IMR-90 (cell line): ENCODE measurements at regions of chr13 and their contacts with region 1.

Region 1: GRCh38 chr13:114226699-114227323 is 7.9 kb upstream of the CDC16 start:
- DNase-seq: peak; percentile 79
- ATAC-seq: peak; percentile 93
- H3K4me3 ChIP-seq: no peak overlapping the region
- H3K27ac ChIP-seq: no peak overlapping the region
- H3K4me1 ChIP-seq: peaks cover 10% of the 10 kb centered on the region
- H3K27me3 ChIP-seq: no peaks in the 10 kb centered on the region
- CTCF ChIP-seq: peak; percentile 97
- POLR2A ChIP-seq: peak; percentile 63; the same call in 1 of the 2 replicates
- RAD21 ChIP-seq: peak; percentile 99

Region 2: DNA sequence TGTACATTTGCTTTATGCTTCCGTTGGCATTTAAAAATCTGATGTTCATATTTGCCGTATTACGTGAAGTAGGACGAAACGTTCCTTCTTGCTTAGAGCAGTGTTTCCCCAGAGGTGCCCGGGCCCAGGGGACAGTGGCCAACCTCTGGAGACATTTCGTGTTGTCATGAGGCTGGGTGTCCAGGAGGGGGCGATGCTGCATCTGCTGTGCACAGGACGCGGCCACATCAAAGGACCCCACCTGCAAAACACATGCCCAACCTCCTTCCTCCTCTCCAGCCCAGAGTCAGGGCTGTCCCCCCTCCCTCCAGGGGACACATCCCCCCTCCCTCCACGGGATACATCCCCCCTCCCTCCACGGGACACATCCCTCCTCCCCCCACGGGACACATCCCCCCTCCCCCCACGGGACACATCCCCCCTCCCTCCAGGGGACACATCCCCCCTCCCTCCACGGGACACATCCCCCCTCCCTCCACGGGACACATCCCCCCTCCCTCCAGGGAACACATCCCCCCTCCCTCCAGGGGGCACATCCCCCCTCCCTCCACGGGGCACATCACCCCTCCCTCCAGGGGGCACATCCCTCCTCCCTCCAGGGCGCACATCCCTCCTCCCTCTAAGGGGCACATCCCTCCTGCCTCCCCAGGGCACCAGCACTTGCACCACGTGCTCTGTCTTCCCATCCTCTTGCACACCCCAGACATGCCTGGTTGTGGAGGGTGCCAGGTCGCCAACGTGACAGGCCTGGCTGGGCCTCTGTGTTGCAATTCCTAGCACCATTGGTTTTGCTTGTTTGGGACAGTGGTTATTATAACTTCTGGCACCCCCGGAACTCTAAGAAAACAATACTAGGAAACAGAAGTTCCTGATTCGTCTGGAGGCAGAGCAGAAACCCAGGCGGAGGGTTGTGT is 409.6 kb before region 1 on chr13:
- CTCF ChIA-PET with region 1: no interaction called
- POLR2A ChIA-PET with region 1: no interaction called
- dilution Hi-C with region 1: no loop called
- in situ Hi-C with region 1: no loop called
- intact Hi-C with region 1: loop called (anchors 1 kb)
- DNase-seq: peak; percentile 83
- ATAC-seq: peak; percentile 3
- H3K4me3 ChIP-seq: no peak overlapping the region
- H3K27ac ChIP-seq: peak overlapping the region; percentile 3; the same call in 1 of the 2 replicates
- H3K4me1 ChIP-seq: peaks cover 32% of the 10 kb centered on the region
- H3K27me3 ChIP-seq: no peaks in the 10 kb centered on the region
- CTCF ChIP-seq: peak; percentile 78
- POLR2A ChIP-seq: no peak
- RAD21 ChIP-seq: peak; percentile 80

Region 3: GRCh38 chr13:113904411-113904810 is 322.4 kb before region 1 on chr13:
- CTCF ChIA-PET with region 1: no interaction called
- POLR2A ChIA-PET with region 1: no interaction called
- dilution Hi-C with region 1: no loop called
- in situ Hi-C with region 1: no loop called
- intact Hi-C with region 1: no loop called
- DNase-seq: peak; percentile 43
- ATAC-seq: no peak
- H3K4me3 ChIP-seq: no peak overlapping the region
- H3K27ac ChIP-seq: peak overlapping the region; percentile 23
- H3K4me1 ChIP-seq: peaks cover 30% of the 10 kb centered on the region
- H3K27me3 ChIP-seq: no peaks in the 10 kb centered on the region
- CTCF ChIP-seq: peak; percentile 58
- POLR2A ChIP-seq: no peak
- RAD21 ChIP-seq: peak; percentile 71

Region 4: GRCh38 chr13:113951246-113951999 is 275.4 kb before region 1 on chr13:
- CTCF ChIA-PET with region 1: no interaction called
- POLR2A ChIA-PET with region 1: no interaction called
- dilution Hi-C with region 1: no loop called
- in situ Hi-C with region 1: no loop called
- intact Hi-C with region 1: loop called (anchors 1 kb)
- DNase-seq: peak; percentile 45
- ATAC-seq: peak; percentile 74
- H3K4me3 ChIP-seq: no peak overlapping the region
- H3K27ac ChIP-seq: no peak overlapping the region
- H3K4me1 ChIP-seq: peaks cover 13% of the 10 kb centered on the region
- H3K27me3 ChIP-seq: no peaks in the 10 kb centered on the region
- CTCF ChIP-seq: peak; percentile 65
- POLR2A ChIP-seq: no peak
- RAD21 ChIP-seq: peak; percentile 75

Region 5: GRCh38 chr13:114025714-114026431 is 200.9 kb before region 1 on chr13:
- CTCF ChIA-PET with region 1: no interaction called
- POLR2A ChIA-PET with region 1: no interaction called
- dilution Hi-C with region 1: no loop called
- in situ Hi-C with region 1: no loop called
- intact Hi-C with region 1: loop called (anchors 2 kb)
- DNase-seq: peak; percentile 78
- ATAC-seq: peak; percentile 82
- H3K4me3 ChIP-seq: no peak overlapping the region
- H3K27ac ChIP-seq: peak overlapping the region; percentile 38; the same call in 1 of the 2 replicates
- H3K4me1 ChIP-seq: peaks cover 27% of the 10 kb centered on the region
- H3K27me3 ChIP-seq: no peaks in the 10 kb centered on the region
- CTCF ChIP-seq: peak; percentile 32; the same call in 1 of the 2 replicates
- POLR2A ChIP-seq: no peak
- RAD21 ChIP-seq: peak; percentile 43; the same call in 1 of the 2 replicates

Region 6: GRCh38 chr13:114174529-114174961 is 52.3 kb before region 1 on chr13:
- CTCF ChIA-PET with region 1: no interaction called
- POLR2A ChIA-PET with region 1: no interaction called
- dilution Hi-C with region 1: no loop called
- in situ Hi-C with region 1: no loop called
- intact Hi-C with region 1: no loop called
- DNase-seq: peak; percentile 55
- ATAC-seq: peak; percentile 33; the same call in 1 of the 2 replicates
- H3K4me3 ChIP-seq: no peak overlapping the region
- H3K27ac ChIP-seq: no peak overlapping the region
- H3K4me1 ChIP-seq: peaks cover 5% of the 10 kb centered on the region; the same call in 1 of the 2 replicates
- H3K27me3 ChIP-seq: peaks cover 21% of the 10 kb centered on the region
- CTCF ChIP-seq: no peak
- POLR2A ChIP-seq: no peak
- RAD21 ChIP-seq: no peak